T-cell (primary cell): ENCODE measurements at regions of chr12 and their contacts with region 1.

Region 1: GRCh38 chr12:14417715-14418114 is 52.2 kb downstream of the ATF7IP start:
- DNase-seq: peak; percentile 19 to 87 (median 75)
- ATAC-seq: peak; percentile 78 to 87 (median 81)
- H3K4me3 ChIP-seq: no peak overlapping the region
- H3K4me3 Mint-ChIP-seq: peak overlapping the region; percentile 68 to 74 (median 71)
- H3K27ac ChIP-seq: peak overlapping the region; percentile 77
- H3K27ac Mint-ChIP-seq: peak overlapping the region; percentile 85 to 90
- H3K4me1 ChIP-seq: peaks cover 17 to 22% of the 10 kb centered on the region in 2 experiments
- H3K4me1 Mint-ChIP-seq: peaks cover 66 to 70% (median 67%) of the 10 kb centered on the region in 3 donors
- H3K27me3 ChIP-seq: no peaks in the 10 kb centered on the region
- H3K27me3 Mint-ChIP-seq: no peaks in the 10 kb centered on the region

Region 2: DNA sequence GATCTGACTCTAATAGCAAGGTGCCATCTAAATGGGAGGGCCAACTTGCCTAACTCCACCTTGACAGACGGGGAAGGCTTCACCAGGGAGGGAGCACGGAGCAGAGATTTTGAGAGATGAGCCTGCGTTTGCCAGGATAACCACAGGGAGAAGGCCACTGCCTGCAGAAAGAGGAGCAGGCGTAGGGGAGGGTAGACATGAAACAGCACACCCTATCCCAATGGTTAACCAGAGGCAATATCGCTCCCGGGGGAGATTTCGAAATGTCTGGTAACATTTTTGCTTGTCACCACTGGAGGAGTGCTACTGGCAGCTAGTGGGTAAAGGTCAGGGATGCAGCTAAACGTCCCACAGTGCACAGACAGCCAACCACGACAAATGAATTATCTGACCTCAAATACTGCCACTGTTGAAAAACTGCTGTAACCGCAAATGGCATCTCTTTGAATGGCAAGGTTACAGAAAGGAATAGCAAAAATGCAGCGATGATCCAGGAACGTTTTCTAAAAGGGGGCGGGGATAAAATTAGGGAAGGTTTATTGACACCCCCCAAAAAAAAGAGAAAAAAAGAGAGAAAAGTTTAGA is 178.3 kb before region 1 on chr12:
- CTCF ChIA-PET with region 1: interaction called, 17 to 114 read pairs
- POLR2A ChIA-PET with region 1: no interaction called
- DNase-seq: peak in 11 of 35 experiments; percentile 10 to 46 (median 21)
- ATAC-seq: peak; percentile 54 to 66 (median 64)
- H3K4me3 ChIP-seq: peak overlapping the region; percentile 45 to 46
- H3K4me3 Mint-ChIP-seq: peak overlapping the region; percentile 78 to 83 (median 82)
- H3K27ac ChIP-seq: peak overlapping the region; percentile 59
- H3K27ac Mint-ChIP-seq: peak overlapping the region; percentile 89 to 92
- H3K4me1 ChIP-seq: peaks cover 6 to 16% of the 10 kb centered on the region in 2 experiments
- H3K4me1 Mint-ChIP-seq: peaks cover 17 to 24% (median 22%) of the 10 kb centered on the region in 3 donors
- H3K27me3 ChIP-seq: no peaks in the 10 kb centered on the region
- H3K27me3 Mint-ChIP-seq: no peaks in the 10 kb centered on the region

Region 3: DNA sequence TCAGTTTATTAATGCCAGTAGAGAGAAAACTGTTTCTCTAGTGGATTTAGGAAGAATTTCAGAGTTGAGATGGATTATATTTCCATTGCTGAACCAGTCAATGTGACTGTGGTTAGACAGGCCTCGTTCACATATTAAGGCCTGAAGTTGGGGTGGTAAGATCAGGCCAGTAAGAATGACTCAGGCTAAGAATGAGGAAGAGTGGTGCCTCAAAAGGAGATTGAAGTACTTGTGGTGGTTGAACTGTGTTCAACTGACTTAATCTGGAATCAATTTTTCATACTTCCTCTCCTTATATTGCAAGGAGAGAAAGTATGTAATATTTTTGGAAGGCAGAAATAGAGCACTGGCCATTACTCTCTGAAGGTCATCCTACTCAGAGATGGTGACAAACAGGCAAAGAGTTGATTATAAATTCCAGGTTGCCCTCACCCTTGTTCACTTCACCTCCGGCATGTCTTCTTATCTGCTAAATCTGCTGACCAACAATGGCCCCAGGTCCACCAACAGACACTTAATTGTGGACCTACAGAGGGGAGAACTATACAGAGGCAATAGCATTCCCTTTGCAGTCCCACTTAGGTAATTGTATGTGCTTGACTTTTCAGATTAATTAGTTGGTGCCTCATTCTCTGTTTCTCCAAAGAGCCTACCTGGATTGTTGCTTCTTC is 89.9 kb before region 1 on chr12:
- CTCF ChIA-PET with region 1: no interaction called
- POLR2A ChIA-PET with region 1: no interaction called
- DNase-seq: no peak
- ATAC-seq: no peak
- H3K4me3 ChIP-seq: no peak overlapping the region
- H3K4me3 Mint-ChIP-seq: no peak overlapping the region
- H3K27ac ChIP-seq: no peak overlapping the region
- H3K27ac Mint-ChIP-seq: no peak overlapping the region
- H3K4me1 ChIP-seq: no peaks in the 10 kb centered on the region
- H3K4me1 Mint-ChIP-seq: no peaks in the 10 kb centered on the region
- H3K27me3 ChIP-seq: no peaks in the 10 kb centered on the region
- H3K27me3 Mint-ChIP-seq: no peaks in the 10 kb centered on the region

Region 4: GRCh38 chr12:14365294-14366208 is 52.2 kb before region 1 on chr12 and contains the start of gene ATF7IP:
- CTCF ChIA-PET with region 1: interaction called, 19 to 115 read pairs
- POLR2A ChIA-PET with region 1: interaction called, 14 to 27 read pairs
- DNase-seq: peak; percentile 89 to 99 (median 96)
- ATAC-seq: peak; percentile 84 to 94 (median 92)
- H3K4me3 ChIP-seq: peak within 1 kb of the TSS; percentile 63 to 75
- H3K4me3 Mint-ChIP-seq: peak within 1 kb of the TSS; percentile 75 to 90 (median 85)
- H3K27ac ChIP-seq: peak within 1 kb of the TSS; percentile 97
- H3K27ac Mint-ChIP-seq: peak within 1 kb of the TSS; percentile 95 to 98
- H3K4me1 ChIP-seq: peaks cover 15 to 22% of the 10 kb centered on the region in 2 experiments
- H3K4me1 Mint-ChIP-seq: peaks cover 37 to 47% (median 44%) of the 10 kb centered on the region in 3 donors
- H3K27me3 ChIP-seq: no peaks in the 10 kb centered on the region
- H3K27me3 Mint-ChIP-seq: no peaks in the 10 kb centered on the region
- total RNA-seq, gene ATF7IP: 112 to 165 (median 147) TPM

Region 5: GRCh38 chr12:14384783-14385638 is 32.7 kb before region 1 on chr12:
- CTCF ChIA-PET with region 1: interaction called, 10 to 44 read pairs
- POLR2A ChIA-PET with region 1: interaction called in 1 of 2 experiments, 5 read pairs
- DNase-seq: peak; percentile 18 to 87 (median 54)
- ATAC-seq: peak; percentile 88 to 93 (median 91)
- H3K4me3 ChIP-seq: peak overlapping the region; percentile 23 to 43
- H3K4me3 Mint-ChIP-seq: peak overlapping the region; percentile 58 to 75 (median 71)
- H3K27ac ChIP-seq: peak overlapping the region; percentile 86
- H3K27ac Mint-ChIP-seq: peak overlapping the region; percentile 89 to 92
- H3K4me1 ChIP-seq: peaks cover 27 to 45% of the 10 kb centered on the region in 2 experiments
- H3K4me1 Mint-ChIP-seq: peaks cover 60 to 68% (median 63%) of the 10 kb centered on the region in 3 donors
- H3K27me3 ChIP-seq: no peaks in the 10 kb centered on the region
- H3K27me3 Mint-ChIP-seq: no peaks in the 10 kb centered on the region

Region 6: GRCh38 chr12:14403711-14404196 is 14.0 kb before region 1 on chr12:
- CTCF ChIA-PET with region 1: interaction called, 6 to 10 read pairs
- POLR2A ChIA-PET with region 1: interaction called, 11 to 14 read pairs
- DNase-seq: peak in 6 of 35 experiments; percentile 16 to 79 (median 26)
- ATAC-seq: peak; percentile 44 to 80 (median 56)
- H3K4me3 ChIP-seq: no peak overlapping the region
- H3K4me3 Mint-ChIP-seq: peak overlapping the region; percentile 59 to 63 (median 59)
- H3K27ac ChIP-seq: peak overlapping the region; percentile 73
- H3K27ac Mint-ChIP-seq: peak overlapping the region; percentile 82 to 90
- H3K4me1 ChIP-seq: peaks cover 15 to 36% of the 10 kb centered on the region in 2 experiments
- H3K4me1 Mint-ChIP-seq: peaks cover 67 to 84% (median 81%) of the 10 kb centered on the region in 3 donors
- H3K27me3 ChIP-seq: no peaks in the 10 kb centered on the region
- H3K27me3 Mint-ChIP-seq: no peaks in the 10 kb centered on the region

Region 7: DNA sequence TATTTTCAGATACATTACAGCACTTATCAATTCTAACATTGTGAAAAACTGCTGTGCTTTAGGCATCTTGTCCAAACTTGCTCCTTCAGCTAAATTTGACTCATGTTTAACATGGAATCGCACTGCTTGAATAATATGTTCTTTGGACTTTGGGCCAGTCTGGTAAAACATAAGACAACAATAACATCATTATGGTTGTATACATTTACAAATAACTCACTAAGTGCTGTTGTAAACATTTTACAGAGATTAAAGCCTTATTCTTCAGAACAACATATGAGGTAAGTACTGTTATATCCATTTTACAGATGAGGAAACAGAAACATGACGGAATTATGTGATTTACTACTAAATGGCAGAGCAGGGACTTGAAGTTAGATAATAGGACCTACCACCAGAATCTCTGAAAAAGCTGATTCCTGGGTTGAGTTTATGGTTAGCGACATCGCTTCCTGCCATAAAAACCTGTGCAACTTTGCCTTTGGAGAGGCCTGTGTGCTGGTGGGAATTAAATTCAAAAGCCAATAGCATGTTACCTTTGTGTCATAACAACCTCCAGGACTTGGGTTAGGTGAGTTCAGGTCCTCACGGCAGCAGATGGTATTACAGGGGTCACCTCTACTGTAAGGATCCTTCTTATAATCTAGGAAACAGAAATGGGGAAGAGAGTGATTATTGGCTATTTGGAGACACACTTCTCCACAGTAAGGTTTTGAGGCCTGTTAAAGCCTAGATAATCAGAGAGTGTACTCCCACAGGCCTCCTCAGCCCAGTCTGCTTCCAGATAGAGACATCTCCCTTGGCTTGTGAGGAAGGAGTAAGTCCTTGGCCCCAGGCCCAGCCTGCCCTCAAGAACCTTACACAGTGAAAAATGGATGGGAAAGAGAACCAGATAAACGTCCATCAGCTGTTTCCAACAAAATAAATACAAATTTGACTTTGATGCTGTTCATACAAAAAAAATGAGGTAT is 88.2 kb after region 1 on chr12:
- CTCF ChIA-PET with region 1: no interaction called
- POLR2A ChIA-PET with region 1: interaction called in 1 of 2 experiments, 12 read pairs
- DNase-seq: no peak
- ATAC-seq: no peak
- H3K4me3 ChIP-seq: no peak overlapping the region
- H3K4me3 Mint-ChIP-seq: no peak overlapping the region
- H3K27ac ChIP-seq: no peak overlapping the region
- H3K27ac Mint-ChIP-seq: peak overlapping the region in 1 of 2 donors; percentile 13
- H3K4me1 ChIP-seq: no peaks in the 10 kb centered on the region
- H3K4me1 Mint-ChIP-seq: no peaks in the 10 kb centered on the region
- H3K27me3 ChIP-seq: no peaks in the 10 kb centered on the region
- H3K27me3 Mint-ChIP-seq: no peaks in the 10 kb centered on the region